Activated CD4-positive, alpha-beta T cell treated with anti-CD3 and anti-CD28 coated beads for 36 hours (primary cell): ENCODE measurements at regions of chr19 and their contacts with region 1.

Region 1: GRCh38 chr19:48513289-48514122 is 1.9 kb upstream of the LMTK3 start:
- DNase-seq: peak; percentile 86
- ATAC-seq: peak; percentile 81
- H3K4me3 Mint-ChIP-seq: no peak overlapping the region
- H3K27ac Mint-ChIP-seq: peak overlapping the region; percentile 30
- H3K4me1 Mint-ChIP-seq: peaks cover 8% of the 10 kb centered on the region
- H3K27me3 Mint-ChIP-seq: no peaks in the 10 kb centered on the region

Region 2: GRCh38 chr19:48398375-48399235 is 114.9 kb before region 1 on chr19:
- CTCF ChIA-PET with region 1: no interaction called
- POLR2A ChIA-PET with region 1: no interaction called
- intact Hi-C with region 1: loop called in 1 of 2 experiments (anchors 1 kb)
- DNase-seq: peak; percentile 94
- ATAC-seq: peak; percentile 68
- H3K4me3 Mint-ChIP-seq: peak overlapping the region; percentile 83
- H3K27ac Mint-ChIP-seq: no peak overlapping the region
- H3K4me1 Mint-ChIP-seq: peaks cover 29% of the 10 kb centered on the region
- H3K27me3 Mint-ChIP-seq: peaks cover 31% of the 10 kb centered on the region

Region 3: DNA sequence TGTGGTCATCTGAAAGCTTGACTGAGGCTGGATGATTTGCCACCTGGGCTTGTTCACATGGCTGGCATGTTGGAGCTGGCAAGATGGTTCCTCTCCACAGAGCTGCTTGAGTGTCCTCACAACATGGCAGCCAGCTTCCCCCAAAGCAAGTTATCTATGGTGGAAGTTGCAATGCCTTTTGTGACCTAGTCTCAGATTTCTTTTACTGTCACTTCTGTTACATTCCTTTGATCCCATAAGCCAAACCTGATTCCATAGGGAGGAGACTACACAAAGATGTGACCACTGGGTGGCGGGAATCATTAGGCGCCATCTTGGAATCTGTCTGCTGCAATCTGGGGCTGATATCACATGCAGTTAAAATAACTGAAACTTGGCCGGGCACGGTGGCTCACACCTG is 15.7 kb after region 1 on chr19:
- CTCF ChIA-PET with region 1: no interaction called
- POLR2A ChIA-PET with region 1: no interaction called
- intact Hi-C with region 1: no loop called
- DNase-seq: no peak
- ATAC-seq: no peak
- H3K4me3 Mint-ChIP-seq: no peak overlapping the region
- H3K27ac Mint-ChIP-seq: no peak overlapping the region
- H3K4me1 Mint-ChIP-seq: no peaks in the 10 kb centered on the region
- H3K27me3 Mint-ChIP-seq: peaks cover 9% of the 10 kb centered on the region

Region 4: DNA sequence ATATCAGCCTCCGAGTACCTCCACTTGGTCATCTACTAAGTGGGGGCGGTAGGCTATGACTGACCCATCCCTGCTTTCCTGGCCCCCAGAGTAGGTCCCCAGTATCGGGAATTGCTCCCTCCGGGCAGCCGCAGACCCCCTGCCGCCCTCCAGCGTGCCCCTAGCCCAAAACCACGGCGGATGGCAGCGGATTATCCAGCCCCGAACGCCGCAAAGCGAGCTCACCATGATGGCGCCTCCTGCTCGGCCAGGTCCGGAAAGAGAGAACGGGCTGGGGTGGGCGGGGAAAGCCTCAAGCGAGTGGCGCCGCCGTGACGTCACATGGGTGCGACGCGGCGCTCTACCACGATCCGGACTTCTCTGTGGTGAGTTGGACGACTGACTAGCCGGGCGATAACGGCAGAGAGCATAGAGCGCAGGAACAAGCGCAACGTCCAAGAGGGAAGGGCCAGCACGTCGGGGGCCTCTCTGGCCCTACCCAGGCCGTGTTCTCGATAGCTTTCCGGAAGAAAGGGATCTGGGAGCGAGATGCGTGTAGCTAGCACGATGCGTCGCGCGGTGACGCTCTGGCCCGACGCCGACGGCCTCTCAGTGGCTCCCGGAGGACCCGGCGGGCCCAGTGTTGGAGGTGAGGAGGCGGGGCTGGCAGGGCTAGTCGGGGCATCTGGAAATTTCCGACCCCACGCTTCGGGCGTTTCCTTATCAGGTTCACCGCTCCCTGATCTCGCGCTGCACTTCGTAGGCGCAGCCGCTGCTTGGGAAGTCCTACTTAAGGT is 105.6 kb after region 1 on chr19 and contains the starts of genes RPL18 and SPHK2:
- CTCF ChIA-PET with region 1: no interaction called
- POLR2A ChIA-PET with region 1: no interaction called
- intact Hi-C with region 1: loop called in 1 of 2 experiments (anchors 2 kb)
- DNase-seq: peak; percentile 97
- ATAC-seq: peak; percentile 82
- H3K4me3 Mint-ChIP-seq: peak within 1 kb of the TSS; percentile 94
- H3K27ac Mint-ChIP-seq: peak within 1 kb of the TSS; percentile 97
- H3K4me1 Mint-ChIP-seq: peaks cover 48% of the 10 kb centered on the region
- H3K27me3 Mint-ChIP-seq: no peaks in the 10 kb centered on the region
- total RNA-seq, gene RPL18: 2,026 to 2,191 TPM
- total RNA-seq, gene SPHK2: 27.0 TPM

Region 5: DNA sequence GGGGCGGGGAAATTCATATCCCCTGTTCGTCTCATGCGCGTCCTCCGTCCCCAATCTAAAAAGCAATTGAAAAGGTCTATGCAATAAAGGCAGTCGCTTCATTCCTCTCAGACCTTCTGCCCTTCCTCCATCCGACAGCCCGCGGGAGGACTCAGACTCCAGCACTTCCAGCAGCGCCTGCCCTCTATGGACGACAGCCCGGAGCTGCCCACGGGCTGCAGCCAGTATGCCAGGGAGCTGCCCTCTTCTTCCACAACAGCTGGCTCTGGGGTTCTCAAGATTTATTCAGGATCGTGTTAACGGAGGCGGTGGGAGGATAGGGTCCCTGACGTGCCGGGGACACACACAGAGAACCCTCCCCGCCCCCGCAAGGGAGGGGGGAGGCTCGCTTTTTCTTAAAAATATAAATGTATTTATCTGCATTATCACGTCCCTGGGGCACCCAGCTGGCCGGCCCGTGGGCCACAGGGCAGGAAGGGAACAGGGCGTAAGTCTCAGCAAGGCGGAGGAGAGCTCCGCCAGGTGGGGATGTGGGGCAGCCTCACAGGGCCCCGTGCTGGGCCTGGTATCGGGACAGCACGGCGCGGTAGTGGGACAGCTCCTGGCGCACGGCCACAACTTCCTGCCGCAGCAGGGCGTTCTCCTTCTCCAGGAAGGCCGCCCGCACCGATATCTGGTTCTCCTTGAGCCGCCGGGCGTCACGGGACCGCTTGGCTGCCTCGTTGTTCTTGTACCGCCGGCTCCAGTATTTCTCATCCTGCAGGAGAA is 117.0 kb after region 1 on chr19:
- CTCF ChIA-PET with region 1: no interaction called
- POLR2A ChIA-PET with region 1: interaction called, 10 read pairs
- intact Hi-C with region 1: no loop called
- DNase-seq: peak; percentile 22
- ATAC-seq: no peak
- H3K4me3 Mint-ChIP-seq: no peak overlapping the region
- H3K27ac Mint-ChIP-seq: no peak overlapping the region
- H3K4me1 Mint-ChIP-seq: peaks cover 36% of the 10 kb centered on the region
- H3K27me3 Mint-ChIP-seq: no peaks in the 10 kb centered on the region

Region 6: DNA sequence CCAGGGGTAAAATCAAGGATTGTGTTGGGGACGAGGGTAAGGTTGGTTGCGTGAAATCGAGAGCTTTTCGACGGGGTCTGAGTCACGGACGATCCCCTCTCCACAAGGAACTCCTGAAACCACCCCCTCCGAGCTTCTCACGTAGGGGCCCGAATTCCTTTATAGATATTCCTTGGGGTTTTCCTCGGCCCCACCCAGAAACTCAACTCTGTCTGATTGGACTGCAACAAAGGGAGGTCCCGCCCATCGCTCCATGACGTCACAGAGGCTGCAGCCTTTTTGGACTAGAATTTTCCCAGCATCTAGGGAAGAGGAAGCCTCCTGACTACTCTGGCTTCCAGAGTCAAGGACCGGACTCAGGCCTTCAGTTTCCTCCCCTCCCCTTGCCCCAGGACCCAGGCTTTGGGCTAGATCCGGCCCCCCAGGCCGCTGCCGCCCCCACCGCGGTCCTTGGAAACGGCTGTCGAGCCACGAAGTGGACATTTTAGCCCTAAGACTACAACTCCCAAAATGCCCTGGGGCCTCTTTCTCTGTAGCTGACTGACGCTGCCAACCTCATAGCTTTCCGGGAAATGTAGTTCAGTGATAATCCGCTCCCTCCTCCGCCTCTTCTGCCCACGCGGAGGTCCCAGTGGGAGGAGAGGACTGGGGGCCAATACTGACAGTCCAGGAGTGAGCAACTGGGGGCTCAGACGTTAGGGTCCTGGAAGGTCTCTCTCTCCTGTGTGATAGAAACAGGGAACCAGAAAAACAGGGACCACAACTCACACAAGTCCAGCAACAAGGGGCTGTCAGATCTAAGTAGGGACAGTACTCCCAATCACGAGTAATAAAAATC is 233.5 kb after region 1 on chr19 and contains the start of gene IZUMO1:
- CTCF ChIA-PET with region 1: no interaction called
- POLR2A ChIA-PET with region 1: no interaction called
- intact Hi-C with region 1: loop called in 1 of 2 experiments (anchors 5 kb)
- DNase-seq: peak; percentile 77
- ATAC-seq: peak; percentile 86
- H3K4me3 Mint-ChIP-seq: peak within 1 kb of the TSS; percentile 10
- H3K27ac Mint-ChIP-seq: no peak within 1 kb of the TSS
- H3K4me1 Mint-ChIP-seq: peaks cover 16% of the 10 kb centered on the region
- H3K27me3 Mint-ChIP-seq: peaks cover 14% of the 10 kb centered on the region
- total RNA-seq, gene IZUMO1: not detected

Region 7: DNA sequence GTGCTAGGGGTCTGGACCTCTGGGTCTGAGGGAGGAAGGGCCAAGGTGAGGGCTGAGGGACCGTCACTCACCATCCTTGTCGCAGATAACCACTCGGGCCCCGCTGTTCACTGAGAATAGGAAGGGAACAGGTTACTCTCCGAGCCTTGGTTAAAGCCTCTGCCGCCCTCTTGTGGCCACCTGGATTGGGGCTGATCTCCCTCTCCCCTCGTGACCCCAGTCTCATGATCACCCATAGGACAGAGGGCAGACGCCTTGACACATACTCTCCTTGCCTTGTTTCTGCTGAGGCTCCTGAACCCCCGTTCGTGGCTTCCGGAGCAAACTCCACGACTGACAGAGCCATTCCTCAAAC is 322.2 kb after region 1 on chr19:
- CTCF ChIA-PET with region 1: no interaction called
- POLR2A ChIA-PET with region 1: no interaction called
- intact Hi-C with region 1: loop called in 1 of 2 experiments (anchors 10 kb)
- DNase-seq: peak; percentile 98
- ATAC-seq: peak; percentile 99
- H3K4me3 Mint-ChIP-seq: peak overlapping the region; percentile 71
- H3K27ac Mint-ChIP-seq: peak overlapping the region; percentile 83
- H3K4me1 Mint-ChIP-seq: peaks cover 18% of the 10 kb centered on the region
- H3K27me3 Mint-ChIP-seq: no peaks in the 10 kb centered on the region

Region 8: GRCh38 chr19:49651029-49651825 is 1137.7 kb after region 1 on chr19:
- CTCF ChIA-PET with region 1: no interaction called
- POLR2A ChIA-PET with region 1: no interaction called
- intact Hi-C with region 1: no loop called
- DNase-seq: no peak
- ATAC-seq: no peak
- H3K4me3 Mint-ChIP-seq: no peak overlapping the region
- H3K27ac Mint-ChIP-seq: no peak overlapping the region
- H3K4me1 Mint-ChIP-seq: no peaks in the 10 kb centered on the region
- H3K27me3 Mint-ChIP-seq: no peaks in the 10 kb centered on the region